ENCODE measurements at regions of chr7 and their contacts with region 1.

Region 1: DNA sequence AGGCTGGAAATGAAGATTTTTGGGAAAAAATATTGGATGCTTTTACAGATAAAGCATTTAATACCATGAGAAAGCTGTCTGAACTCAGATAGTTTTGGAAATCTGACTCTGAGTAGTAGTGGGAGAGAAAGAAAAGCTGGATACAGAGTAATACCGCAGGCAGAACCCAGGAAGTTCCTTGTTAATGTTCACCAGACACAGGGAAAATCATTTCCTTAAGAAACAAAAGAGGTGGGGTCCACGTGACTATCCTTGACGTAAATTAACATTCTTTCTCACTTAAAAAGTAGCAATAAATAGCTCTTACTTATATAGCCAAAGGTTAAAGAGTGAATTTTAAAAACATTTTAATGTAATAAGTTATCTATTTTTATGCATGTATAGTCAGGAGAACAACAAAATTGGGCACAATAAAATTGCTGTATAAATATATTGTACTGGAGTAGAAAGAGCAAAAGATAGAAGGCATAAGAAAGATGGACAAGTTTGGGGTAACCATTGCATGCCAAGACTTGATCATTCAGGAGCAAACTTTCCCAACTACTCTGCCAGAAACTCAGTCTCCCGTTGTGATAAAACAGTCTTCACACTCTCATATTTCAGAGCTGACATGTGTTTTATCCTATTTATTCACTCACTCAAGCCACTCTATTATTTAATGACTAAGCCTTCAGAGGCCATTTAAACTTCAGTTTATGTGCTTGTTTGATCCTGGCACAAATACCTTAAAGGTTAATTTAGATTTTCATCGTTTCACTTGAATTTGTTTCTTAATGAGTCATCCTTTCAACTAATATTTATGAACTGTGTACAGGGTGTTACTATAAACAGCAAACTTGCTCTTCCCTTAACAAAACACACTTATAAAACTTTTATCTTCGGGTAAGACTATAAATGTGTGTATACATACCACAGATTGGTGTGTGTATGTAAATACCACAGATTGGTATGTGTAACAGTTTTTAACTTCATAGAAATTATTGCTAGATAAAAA is 143.1 kb downstream of the GNAI1 start:
- DNase-seq: no peak
- ATAC-seq: peak; percentile 39

Region 2: DNA sequence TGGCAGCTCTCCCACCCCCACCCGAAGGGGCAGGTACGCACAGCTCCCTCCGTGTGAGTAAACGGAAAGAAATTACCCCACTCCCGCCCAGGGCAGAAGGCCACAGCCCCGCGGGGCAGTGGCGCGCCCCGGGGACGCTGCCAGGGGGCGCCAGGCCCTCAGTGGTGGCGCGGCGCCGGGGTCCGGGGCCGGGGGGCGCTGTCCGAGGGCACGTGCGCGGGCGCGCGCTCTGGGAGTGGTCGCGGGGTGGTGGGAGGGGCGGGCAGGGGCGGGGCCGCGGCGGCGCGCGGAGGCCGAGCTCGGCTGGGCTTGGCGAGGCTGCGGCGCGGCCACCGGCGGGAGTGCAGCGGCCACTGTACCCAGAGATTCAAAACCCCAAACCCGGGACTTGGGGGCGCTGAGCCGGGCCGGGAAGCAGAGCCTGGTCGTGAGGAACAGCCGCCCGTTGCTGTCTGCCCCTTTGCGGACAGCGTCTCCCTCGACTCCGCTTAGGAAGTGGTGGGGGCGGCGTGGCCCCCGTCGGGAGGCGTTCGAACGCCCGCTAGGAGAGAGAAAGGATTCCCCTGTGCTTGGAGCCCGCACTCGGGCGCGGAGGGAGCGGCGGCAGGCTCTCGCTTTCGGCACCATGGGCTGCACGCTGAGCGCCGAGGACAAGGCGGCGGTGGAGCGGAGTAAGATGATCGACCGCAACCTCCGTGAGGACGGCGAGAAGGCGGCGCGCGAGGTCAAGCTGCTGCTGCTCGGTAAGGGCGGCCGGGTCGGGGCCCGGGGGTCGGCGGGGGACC is 143.0 kb before region 1 on chr7 and contains the start of gene GNAI1:
- intact Hi-C with region 1: loop called (anchors 10 kb)
- DNase-seq: peak; percentile 81
- ATAC-seq: peak; percentile 93
- total RNA-seq, gene GNAI1: 13.7 TPM